ENCODE measurements at regions of chr7 and their contacts with region 1.

Region 1: GRCh38 chr7:156640257-156640948 is at the start of gene RNF32:
- DNase-seq: peak; percentile 72 to 100 (median 81)
- ATAC-seq: peak; percentile 88
- H3K4me3 ChIP-seq: peak within 1 kb of the TSS; percentile 77
- H3K4me3 Mint-ChIP-seq: peak within 1 kb of the TSS; percentile 78 to 98 (median 87)
- H3K27ac ChIP-seq: peak within 1 kb of the TSS; percentile 67
- H3K27ac Mint-ChIP-seq: peak within 1 kb of the TSS in 8 of 9 donors; percentile 50 to 100 (median 84)
- H3K4me1 ChIP-seq: peaks cover 6% of the 10 kb centered on the region in 2 donors
- H3K4me1 Mint-ChIP-seq: peaks cover 7 to 48% (median 17%) of the 10 kb centered on the region in 7 donors
- H3K27me3 ChIP-seq: no peaks in the 10 kb centered on the region
- H3K27me3 Mint-ChIP-seq: peaks cover 12 to 65% (median 42%) of the 10 kb centered on the region in 5 donors
- total RNA-seq, gene RNF32: 0.81 to 2.1 (median 0.99) TPM in 4 of 5 experiments, not detected in the other

Region 2: DNA sequence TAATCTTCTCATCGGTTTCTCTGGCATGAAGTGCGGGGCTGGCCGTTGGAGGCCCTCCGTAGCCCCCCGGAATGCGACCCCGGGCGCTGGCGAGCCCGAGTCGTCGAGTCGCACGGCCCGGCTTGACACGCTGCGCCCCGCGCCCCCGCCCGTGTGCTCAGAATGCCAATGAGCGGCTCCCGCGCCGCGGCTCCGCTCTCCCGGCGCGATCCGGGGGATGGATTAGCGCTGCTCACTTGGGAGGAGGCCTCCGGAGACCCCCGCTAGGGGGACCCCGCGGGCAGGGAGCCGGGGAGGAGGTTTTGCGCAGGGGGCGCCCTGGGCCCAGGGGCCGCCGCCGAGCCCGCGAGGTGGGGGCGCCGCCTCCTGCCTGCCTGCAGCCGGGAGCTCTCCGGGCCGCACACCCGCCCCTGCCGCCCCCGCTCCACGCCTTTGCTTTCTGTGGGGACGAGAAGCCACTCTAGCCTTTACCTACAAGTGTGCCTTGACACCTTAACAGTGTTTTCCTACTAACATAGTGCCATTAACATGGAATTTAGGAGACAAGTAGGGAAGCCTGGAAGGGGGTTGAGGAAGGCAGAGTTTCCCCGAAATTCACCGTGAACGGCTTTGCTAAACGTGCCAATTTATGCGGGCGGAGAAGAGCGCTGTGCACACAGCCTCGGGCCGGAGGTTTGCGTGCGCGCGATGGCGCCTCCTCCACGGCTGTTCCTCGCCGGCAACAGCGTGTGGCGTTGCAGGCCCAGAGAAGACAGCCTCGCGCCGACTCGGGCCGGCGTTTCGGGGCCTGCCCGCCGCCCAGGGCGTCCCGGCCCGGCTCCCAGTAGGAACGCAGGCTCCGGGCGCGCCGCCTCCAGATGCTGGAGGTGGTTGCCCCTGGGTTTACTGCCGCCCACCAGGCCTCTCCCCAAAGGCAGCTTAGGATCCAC is 835.2 kb before region 1 on chr7:
- CTCF ChIA-PET with region 1: no interaction called
- POLR2A ChIA-PET with region 1: no interaction called
- intact Hi-C with region 1: loop called in 1 of 2 experiments (anchors 10 kb)
- DNase-seq: peak in 8 of 9 donors; percentile 22 to 78 (median 32)
- ATAC-seq: peak; percentile 63
- H3K4me3 ChIP-seq: peak overlapping the region; percentile 47
- H3K4me3 Mint-ChIP-seq: peak overlapping the region; percentile 66 to 85 (median 76)
- H3K27ac ChIP-seq: no peak overlapping the region
- H3K27ac Mint-ChIP-seq: no peak overlapping the region
- H3K4me1 ChIP-seq: no peaks in the 10 kb centered on the region
- H3K4me1 Mint-ChIP-seq: peaks cover 3 to 35% (median 17%) of the 10 kb centered on the region in 7 donors
- H3K27me3 ChIP-seq: peaks cover 0 to 4% of the 10 kb centered on the region in 2 donors
- H3K27me3 Mint-ChIP-seq: peaks cover 39 to 65% (median 49%) of the 10 kb centered on the region in 5 donors

Region 3: GRCh38 chr7:156612930-156613329 is 27.5 kb before region 1 on chr7:
- CTCF ChIA-PET with region 1: no interaction called
- POLR2A ChIA-PET with region 1: no interaction called
- intact Hi-C with region 1: loop called (anchors 1 kb)
- DNase-seq: peak in 8 of 9 donors; percentile 50 to 83 (median 74)
- ATAC-seq: peak; percentile 94
- H3K4me3 ChIP-seq: no peak overlapping the region
- H3K4me3 Mint-ChIP-seq: peak overlapping the region in 9 of 10 donors; percentile 3 to 77 (median 40)
- H3K27ac ChIP-seq: no peak overlapping the region
- H3K27ac Mint-ChIP-seq: peak overlapping the region in 6 of 9 donors; percentile 12 to 76 (median 38)
- H3K4me1 ChIP-seq: peaks cover 14 to 22% of the 10 kb centered on the region in 2 donors
- H3K4me1 Mint-ChIP-seq: peaks cover 17 to 55% (median 41%) of the 10 kb centered on the region in 7 donors
- H3K27me3 ChIP-seq: peaks cover 0 to 4% of the 10 kb centered on the region in 2 donors
- H3K27me3 Mint-ChIP-seq: peaks cover 38 to 72% (median 47%) of the 10 kb centered on the region in 5 donors

Region 4: DNA sequence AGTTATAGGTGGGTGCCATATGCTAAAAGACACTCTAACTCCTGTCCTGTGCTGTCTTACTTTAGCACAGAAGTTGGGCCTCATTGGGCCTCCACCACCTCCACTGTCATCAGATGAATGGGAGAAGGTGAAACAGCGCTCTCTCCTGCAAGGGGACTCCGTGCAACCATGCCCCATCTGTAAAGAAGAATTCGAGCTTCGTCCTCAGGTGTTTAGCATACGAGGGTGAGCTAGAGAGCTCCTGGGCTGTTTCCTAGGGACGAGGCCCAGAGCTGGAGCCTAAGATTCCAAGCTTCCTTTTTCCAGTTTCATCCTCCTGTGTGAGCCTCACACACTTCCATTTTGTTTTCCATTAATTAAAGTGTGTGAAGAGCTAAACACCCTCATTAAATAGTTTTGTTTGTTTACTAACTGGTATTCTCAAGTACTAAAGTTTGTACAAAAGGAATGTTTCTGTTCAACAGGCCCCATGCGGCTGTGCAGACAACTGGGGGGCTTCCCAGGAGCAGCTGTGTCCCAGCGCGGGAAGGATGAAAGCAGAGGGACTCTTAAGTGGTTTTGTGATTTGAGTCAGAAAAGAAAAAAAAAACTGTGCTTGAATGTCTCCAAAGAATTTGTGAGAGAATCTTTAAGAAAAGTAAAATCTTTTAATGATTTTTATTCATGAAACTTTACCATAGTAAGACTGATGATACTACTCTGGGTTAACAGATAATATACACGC is 14.3 kb after region 1 on chr7:
- CTCF ChIA-PET with region 1: no interaction called
- POLR2A ChIA-PET with region 1: no interaction called
- intact Hi-C with region 1: loop called in 1 of 2 experiments (anchors 2 kb)
- DNase-seq: no peak
- ATAC-seq: no peak
- H3K4me3 ChIP-seq: no peak overlapping the region
- H3K4me3 Mint-ChIP-seq: no peak overlapping the region
- H3K27ac ChIP-seq: no peak overlapping the region
- H3K27ac Mint-ChIP-seq: no peak overlapping the region
- H3K4me1 ChIP-seq: no peaks in the 10 kb centered on the region
- H3K4me1 Mint-ChIP-seq: peaks cover 0 to 11% (median 0%) of the 10 kb centered on the region in 7 donors
- H3K27me3 ChIP-seq: peaks cover 1 to 4% of the 10 kb centered on the region in 2 donors
- H3K27me3 Mint-ChIP-seq: peaks cover 18 to 40% (median 30%) of the 10 kb centered on the region in 5 donors

Region 5: GRCh38 chr7:156816943-156817572 is 176.7 kb after region 1 on chr7:
- CTCF ChIA-PET with region 1: no interaction called
- POLR2A ChIA-PET with region 1: no interaction called
- intact Hi-C with region 1: loop called in 1 of 2 experiments (anchors 5 kb)
- DNase-seq: peak in 1 of 9 donors; percentile 5
- ATAC-seq: no peak
- H3K4me3 ChIP-seq: no peak overlapping the region
- H3K4me3 Mint-ChIP-seq: no peak overlapping the region
- H3K27ac ChIP-seq: no peak overlapping the region
- H3K27ac Mint-ChIP-seq: no peak overlapping the region
- H3K4me1 ChIP-seq: no peaks in the 10 kb centered on the region
- H3K4me1 Mint-ChIP-seq: peaks cover 0 to 2% (median 0%) of the 10 kb centered on the region in 7 donors
- H3K27me3 ChIP-seq: no peaks in the 10 kb centered on the region
- H3K27me3 Mint-ChIP-seq: no peaks in the 10 kb centered on the region

Measured in naive thymus-derived CD4-positive, alpha-beta T cell (primary cell).